Activated B cell treated with CpG ODN at 0.5 μM for 24 hours (primary cell): ENCODE measurements at regions of chr17 and their contacts with region 1.

Region 1: DNA sequence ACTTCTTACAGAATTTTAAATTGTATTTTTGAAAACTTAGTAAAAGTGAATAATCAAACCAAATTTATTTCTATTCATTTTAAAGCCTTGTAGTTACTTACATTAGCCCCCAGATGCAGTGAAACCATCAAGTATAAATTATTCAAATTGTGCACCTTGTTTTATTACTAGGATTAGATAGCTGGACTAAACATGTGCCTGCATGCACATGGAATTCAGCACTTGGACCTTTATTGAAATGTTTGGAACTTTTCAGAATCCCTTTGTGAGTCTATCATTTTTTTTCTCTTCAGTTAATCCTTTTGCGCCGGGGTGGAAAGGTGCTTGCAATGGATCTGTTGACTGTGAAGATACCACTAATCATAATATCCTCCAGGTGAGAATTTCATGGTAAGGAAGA is 4.7 kb downstream of the ZPBP2 start:
- DNase-seq: no peak
- ATAC-seq: peak; percentile 45
- H3K4me3 Mint-ChIP-seq: peak overlapping the region; percentile 58
- H3K27ac Mint-ChIP-seq: peak overlapping the region; percentile 62
- H3K4me1 Mint-ChIP-seq: peaks cover 43% of the 10 kb centered on the region
- H3K27me3 Mint-ChIP-seq: no peaks in the 10 kb centered on the region
- CTCF ChIP-seq: no peak

Region 2: GRCh38 chr17:39777534-39778365 is 95.0 kb before region 1 on chr17:
- CTCF ChIA-PET with region 1: no interaction called
- POLR2A ChIA-PET with region 1: no interaction called
- intact Hi-C with region 1: no loop called
- DNase-seq: no peak
- ATAC-seq: peak; percentile 44
- H3K4me3 Mint-ChIP-seq: peak overlapping the region; percentile 88
- H3K27ac Mint-ChIP-seq: peak overlapping the region; percentile 96
- H3K4me1 Mint-ChIP-seq: peaks cover 93% of the 10 kb centered on the region
- H3K27me3 Mint-ChIP-seq: no peaks in the 10 kb centered on the region
- CTCF ChIP-seq: no peak

Region 3: DNA sequence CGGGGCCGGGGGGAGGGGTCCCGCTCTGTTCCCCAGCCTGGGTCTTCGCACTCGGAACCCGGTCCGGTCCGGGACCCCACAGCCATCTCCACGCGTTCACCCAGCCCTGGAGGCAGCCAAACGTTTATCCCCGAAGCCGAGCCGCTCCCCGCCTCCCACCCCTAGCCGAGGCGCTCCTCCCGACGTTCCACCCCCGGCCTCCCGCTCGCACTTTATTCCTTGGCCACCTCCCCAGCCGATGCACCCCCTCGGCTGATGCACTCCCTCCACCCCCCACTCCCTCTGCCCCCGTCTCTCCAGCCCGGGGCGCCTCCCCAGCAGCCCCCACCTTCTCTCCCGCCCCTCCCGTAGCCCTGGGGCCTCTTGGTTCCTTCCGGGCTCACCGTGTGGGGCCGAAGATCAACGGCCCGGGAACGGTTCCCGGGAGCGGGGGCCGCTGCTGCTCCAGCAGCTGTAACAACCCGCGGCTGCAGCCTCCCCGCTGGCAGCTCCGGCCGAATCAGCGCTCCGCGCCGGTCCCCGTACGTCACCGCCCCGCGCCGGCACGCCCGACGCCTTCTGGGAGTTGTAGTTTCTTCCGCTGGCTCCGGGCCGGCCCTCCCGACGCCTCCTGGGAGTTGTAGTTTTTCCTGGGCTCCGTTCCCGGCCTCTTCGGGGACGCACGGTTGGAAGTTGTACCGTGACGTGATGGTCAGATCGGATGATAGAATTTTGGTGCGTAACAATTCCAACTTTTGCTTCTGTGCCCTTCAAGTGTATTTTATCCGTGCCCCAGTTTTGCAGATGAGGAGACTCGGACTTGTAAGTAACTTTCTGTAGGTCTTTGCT is 54.6 kb after region 1 on chr17 and contains the starts of genes LRRC3C and ORMDL3:
- CTCF ChIA-PET with region 1: interaction called, 3 read pairs
- POLR2A ChIA-PET with region 1: no interaction called
- intact Hi-C with region 1: loop called (anchors 5 kb)
- DNase-seq: peak; percentile 91
- ATAC-seq: peak; percentile 92
- H3K4me3 Mint-ChIP-seq: peak within 1 kb of the TSS; percentile 97
- H3K27ac Mint-ChIP-seq: peak within 1 kb of the TSS; percentile 82
- H3K4me1 Mint-ChIP-seq: peaks cover 40% of the 10 kb centered on the region
- H3K27me3 Mint-ChIP-seq: no peaks in the 10 kb centered on the region
- CTCF ChIP-seq: no peak
- total RNA-seq, gene LRRC3C: not detected in 2 replicates
- total RNA-seq, gene ORMDL3: 38.5 and 49.1 TPM in 2 replicates

Region 4: GRCh38 chr17:39963829-39964228 is 91.1 kb after region 1 on chr17:
- CTCF ChIA-PET with region 1: interaction called, 30 read pairs
- POLR2A ChIA-PET with region 1: interaction called, 6 read pairs
- intact Hi-C with region 1: loop called (anchors 1 kb)
- DNase-seq: no peak
- ATAC-seq: no peak
- H3K4me3 Mint-ChIP-seq: no peak overlapping the region
- H3K27ac Mint-ChIP-seq: no peak overlapping the region
- H3K4me1 Mint-ChIP-seq: peaks cover 13% of the 10 kb centered on the region
- H3K27me3 Mint-ChIP-seq: peaks cover 11% of the 10 kb centered on the region
- CTCF ChIP-seq: no peak

Region 5: DNA sequence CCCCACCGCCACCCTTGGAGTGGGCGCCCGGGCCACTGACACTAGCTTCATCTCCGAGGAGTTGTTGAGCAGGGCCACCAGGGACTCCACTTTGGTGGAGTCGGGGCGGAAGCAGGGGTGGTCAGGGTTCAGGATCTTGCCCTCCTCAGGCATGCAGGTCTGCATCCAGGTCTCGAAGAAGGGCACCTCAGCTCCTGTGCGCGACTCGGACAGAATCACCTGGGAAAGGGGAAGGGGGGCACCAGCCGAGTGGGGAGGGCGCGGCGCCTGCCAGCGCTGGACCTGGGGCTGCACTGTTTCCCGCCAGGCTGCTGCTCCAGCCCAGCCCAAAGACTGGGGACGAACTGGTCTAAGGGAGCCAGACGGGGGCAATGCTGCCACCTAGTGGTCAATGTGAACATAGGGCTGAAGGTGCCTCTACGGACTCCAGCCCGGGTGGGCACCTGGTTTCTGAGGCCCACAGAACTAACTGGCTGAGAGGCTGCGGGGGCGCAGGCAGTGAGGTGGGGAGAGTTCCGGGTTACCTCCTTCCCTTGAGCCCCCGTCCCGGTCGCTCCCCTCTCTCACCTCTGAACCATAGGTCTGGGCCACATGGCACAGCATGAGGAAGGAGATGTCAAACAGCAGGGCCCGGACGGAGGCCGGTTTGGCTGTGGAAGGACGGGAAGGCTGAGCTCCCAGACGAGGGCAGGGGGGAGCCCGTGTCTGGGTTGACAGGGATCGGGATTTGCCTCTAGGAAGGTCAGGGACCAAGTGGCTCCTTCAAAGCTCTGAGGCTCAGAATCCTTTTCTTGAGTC is 154.3 kb after region 1 on chr17:
- CTCF ChIA-PET with region 1: interaction called, 7 read pairs
- POLR2A ChIA-PET with region 1: no interaction called
- intact Hi-C with region 1: loop called (anchors 1 kb)
- DNase-seq: peak; percentile 62
- ATAC-seq: peak; percentile 92
- H3K4me3 Mint-ChIP-seq: no peak overlapping the region
- H3K27ac Mint-ChIP-seq: no peak overlapping the region
- H3K4me1 Mint-ChIP-seq: no peaks in the 10 kb centered on the region
- H3K27me3 Mint-ChIP-seq: no peaks in the 10 kb centered on the region
- CTCF ChIP-seq: no peak